ENCODE measurements at regions of chr1 and their contacts with region 1.

Region 1: DNA sequence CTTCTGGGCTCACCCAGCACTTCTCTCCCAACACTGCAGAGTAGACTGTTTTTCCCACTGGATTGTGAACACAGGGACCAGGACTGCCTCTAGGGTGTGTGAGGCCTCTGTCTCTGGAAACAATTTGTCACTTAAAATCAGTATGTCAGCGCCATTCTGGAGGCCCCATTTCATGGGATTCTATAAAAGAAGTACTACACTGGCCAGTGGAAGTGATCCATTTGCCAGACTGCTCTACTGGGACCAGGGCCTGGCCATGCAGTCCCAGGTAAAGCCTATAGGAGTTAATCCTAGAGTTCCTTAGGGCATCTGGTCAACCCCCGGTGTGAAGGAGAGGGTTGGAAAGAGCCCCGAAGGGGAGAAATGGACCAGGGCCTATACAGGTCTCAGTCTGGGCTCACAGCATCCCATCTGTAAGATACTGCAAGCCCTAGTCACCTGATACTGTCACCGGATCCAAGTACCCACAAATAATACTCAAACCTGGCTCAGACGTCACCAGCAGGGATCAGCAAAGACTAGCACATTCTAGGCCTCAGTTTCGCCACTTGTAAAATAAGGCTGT is 245.0 kb downstream of the FOXD2 start:
- DNase-seq: no peak
- ATAC-seq: no peak
- H3K4me3 ChIP-seq: no peak overlapping the region
- H3K27ac ChIP-seq: no peak overlapping the region
- H3K4me1 ChIP-seq: peaks cover 0 to 4% (median 0%) of the 10 kb centered on the region in 9 donors
- H3K27me3 ChIP-seq: peaks cover 0 to 39% (median 25%) of the 10 kb centered on the region in 7 donors
- CTCF ChIP-seq: no peak

Region 2: GRCh38 chr1:47618830-47619229 is 64.0 kb before region 1 on chr1:
- intact Hi-C with region 1: loop called in 1 of 10 experiments (anchors 1 kb)
- DNase-seq: no peak
- ATAC-seq: no peak
- H3K4me3 ChIP-seq: no peak overlapping the region
- H3K27ac ChIP-seq: no peak overlapping the region
- H3K4me1 ChIP-seq: peaks cover 0 to 10% (median 0%) of the 10 kb centered on the region in 9 donors
- H3K27me3 ChIP-seq: peaks cover 0 to 3% (median 0%) of the 10 kb centered on the region in 7 donors
- CTCF ChIP-seq: no peak

Region 3: GRCh38 chr1:47712596-47713286 is 29.9 kb after region 1 on chr1:
- intact Hi-C with region 1: no loop called
- DNase-seq: no peak
- ATAC-seq: no peak
- H3K4me3 ChIP-seq: no peak overlapping the region
- H3K27ac ChIP-seq: no peak overlapping the region
- H3K4me1 ChIP-seq: peaks cover 6 to 30% (median 24%) of the 10 kb centered on the region in 9 donors
- H3K27me3 ChIP-seq: peaks cover 21 to 100% (median 98%) of the 10 kb centered on the region in 7 donors
- CTCF ChIP-seq: no peak

Region 4: DNA sequence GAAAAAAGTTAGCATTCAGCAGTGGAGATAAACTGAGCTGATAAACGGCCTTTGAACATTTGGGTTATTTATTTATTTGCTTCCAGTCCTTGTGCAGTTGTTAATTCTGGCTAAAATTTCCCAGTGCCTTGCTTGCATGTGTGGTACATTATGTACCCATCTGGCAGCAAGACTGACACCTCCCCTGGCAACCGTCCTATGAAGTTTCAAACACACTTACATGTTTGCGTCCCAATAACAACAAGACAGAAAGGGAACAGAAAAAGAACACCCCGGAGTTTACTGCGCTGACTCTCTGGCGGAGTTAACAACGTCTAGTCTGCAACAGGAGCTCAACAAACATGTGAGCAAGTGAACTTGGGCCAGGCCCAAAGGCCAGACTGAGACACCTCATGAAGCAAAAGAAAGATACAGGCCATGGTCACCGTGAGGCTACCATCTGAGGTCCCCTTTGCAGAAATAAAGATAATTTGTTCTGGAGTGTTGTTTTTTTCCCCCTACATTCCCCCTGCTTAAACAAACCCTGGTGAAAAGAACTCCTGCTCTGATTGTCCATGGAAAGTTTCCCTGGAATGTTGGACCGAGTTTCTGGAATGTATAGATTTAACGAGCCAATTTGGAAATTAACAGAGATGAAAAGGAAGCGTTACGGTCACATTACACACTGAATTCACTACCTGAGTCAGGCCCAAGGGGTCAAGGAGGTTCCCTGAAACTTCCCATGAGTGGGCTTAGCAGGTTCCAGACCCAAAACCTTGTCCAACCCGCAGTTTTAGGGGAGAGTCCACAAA is 280.9 kb after region 1 on chr1:
- intact Hi-C with region 1: no loop called
- DNase-seq: no peak
- ATAC-seq: peak in 1 of 8 donors; percentile 89
- H3K4me3 ChIP-seq: no peak overlapping the region
- H3K27ac ChIP-seq: no peak overlapping the region
- H3K4me1 ChIP-seq: peaks cover 0 to 9% (median 0%) of the 10 kb centered on the region in 9 donors
- H3K27me3 ChIP-seq: peaks cover 0 to 5% (median 0%) of the 10 kb centered on the region in 7 donors
- CTCF ChIP-seq: no peak

Measured in heart right ventricle (tissue), 16 donors.